ENCODE measurements at regions of chr16 and their contacts with region 1.

Region 1: DNA sequence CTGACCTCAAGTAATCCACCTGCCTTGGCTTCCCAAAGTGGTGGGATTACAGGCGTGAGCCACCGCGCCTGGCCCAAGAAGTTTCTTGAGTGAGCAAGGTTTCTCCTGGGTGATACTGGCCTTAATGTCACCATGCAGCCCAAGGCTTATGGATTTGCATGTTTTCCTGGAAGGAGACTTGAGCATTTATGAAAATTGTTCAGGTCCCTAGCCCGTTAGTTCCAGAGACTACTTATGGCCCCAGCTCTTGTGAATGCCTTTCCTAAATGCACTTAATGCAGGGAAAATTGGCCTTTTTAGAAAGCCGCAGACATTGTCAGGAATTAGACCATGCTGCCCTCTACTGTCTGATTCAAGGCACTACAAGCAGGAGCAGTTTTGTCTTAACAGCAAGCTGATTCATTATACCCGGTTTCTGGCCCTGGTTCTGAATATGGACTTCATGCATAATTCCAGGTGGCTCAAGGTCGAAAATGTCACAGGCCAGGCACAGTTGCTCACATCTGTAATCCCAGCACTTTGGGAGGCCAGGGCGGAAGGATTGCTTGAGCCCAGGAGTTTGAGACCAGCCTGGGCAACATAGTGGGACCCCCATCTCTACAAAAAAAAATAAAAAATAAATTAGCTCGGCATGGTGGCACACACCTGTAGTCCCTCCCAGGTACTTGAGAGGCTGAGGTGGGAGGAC is 91.3 kb downstream of the SNX29 start:
- DNase-seq: peak; percentile 77
- CTCF ChIP-seq: peak; percentile 86

Region 2: DNA sequence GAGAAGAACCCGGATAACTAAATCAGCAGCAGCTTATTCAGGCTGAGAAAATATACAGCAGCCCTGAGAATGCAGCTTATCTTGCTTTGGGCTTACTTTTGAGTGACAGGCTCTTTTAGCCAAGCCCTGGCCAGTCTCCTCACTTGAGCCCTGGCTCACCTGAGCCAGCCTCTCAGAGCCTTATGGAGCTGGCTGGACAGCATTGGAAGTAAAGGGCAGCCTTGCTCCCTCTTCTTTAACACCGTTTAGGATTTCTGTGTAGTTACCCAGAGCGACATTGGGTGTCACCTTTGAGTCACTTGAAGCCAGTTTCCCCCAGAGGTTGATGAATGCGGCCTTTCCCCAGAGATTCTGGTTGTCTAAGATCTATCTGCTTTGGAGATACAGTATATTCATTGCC is 118.3 kb before region 1 on chr16:
- CTCF ChIA-PET with region 1: interaction called, 54 read pairs
- POLR2A ChIA-PET with region 1: no interaction called
- DNase-seq: peak; percentile 81
- CTCF ChIP-seq: peak; percentile 81

Region 3: GRCh38 chr16:11964761-11965551 is 102.9 kb before region 1 on chr16 and contains the start of gene TNFRSF17:
- CTCF ChIA-PET with region 1: interaction called, 18 read pairs
- POLR2A ChIA-PET with region 1: no interaction called
- DNase-seq: peak; percentile 71
- CTCF ChIP-seq: no peak

Region 4: DNA sequence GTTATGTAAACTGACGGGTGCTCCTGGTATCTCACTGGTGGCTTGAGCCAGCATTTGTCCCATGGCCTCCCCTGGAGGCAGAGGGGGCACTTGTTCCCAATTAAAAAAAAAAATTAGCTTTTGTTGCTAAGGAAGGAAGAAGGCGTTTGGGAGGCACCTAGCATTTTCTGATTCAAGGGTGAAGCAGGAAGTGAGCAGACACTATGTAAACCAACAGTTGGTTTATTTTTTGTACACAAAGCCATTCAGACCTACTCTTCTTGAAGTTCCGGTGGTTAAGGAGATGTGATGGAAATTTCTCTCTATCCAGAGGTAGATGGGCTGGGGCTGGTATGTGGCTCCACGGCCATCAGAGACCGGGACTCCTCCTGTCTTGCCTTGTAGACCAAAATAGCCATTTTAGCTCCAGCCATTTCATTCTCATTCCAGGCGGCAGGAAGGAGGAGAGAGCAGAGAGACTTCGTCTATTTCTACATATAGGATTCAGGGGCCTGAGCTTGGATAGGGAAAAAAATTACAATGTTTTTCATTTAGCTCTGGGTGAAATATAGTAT is 11.6 kb after region 1 on chr16:
- CTCF ChIA-PET with region 1: interaction called, 28 read pairs
- POLR2A ChIA-PET with region 1: no interaction called
- DNase-seq: no peak
- CTCF ChIP-seq: no peak

Region 5: DNA sequence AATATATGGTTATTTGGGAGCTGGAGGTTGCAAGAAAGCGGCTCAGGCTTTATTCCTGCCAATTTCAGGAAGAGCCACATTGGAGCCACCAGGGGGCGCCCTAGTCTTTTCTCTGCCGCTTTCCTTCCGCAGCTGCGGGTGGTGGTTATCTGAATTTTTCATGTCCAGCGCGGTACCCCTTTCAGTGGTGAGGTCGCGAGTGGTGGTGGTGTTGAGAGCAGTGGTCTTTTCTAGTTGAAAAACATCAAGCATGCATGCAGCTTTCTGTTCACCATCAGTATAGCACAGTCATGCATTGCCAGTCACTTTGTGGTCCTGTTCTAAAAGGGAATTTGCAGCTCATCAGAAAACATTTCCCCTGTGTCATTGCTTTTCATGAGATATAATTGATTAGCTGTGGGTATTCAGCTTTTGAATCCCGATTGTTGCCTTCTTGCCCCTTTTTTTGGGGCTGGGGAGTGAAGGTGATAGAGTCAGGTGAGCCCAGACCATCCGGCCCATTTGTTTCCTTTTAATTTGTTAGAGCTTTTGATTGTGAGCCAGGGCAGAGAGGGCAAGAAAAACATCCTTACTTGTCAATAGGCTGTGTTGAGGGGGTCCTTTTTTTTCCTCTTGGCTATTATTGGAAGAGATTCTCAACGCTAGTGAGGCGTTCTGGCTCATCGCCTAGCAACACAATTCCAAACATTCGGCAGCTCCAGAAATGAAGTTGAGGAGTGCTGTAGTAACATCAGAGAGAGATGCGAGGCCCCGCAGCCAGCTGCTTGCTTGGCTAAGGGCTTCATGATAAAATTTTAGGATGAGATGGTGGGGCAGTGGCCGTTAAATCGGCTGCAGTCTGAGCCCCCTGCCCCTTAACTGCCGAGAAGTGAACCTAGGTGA is 27.7 kb after region 1 on chr16:
- CTCF ChIA-PET with region 1: interaction called, 15 read pairs
- POLR2A ChIA-PET with region 1: no interaction called
- DNase-seq: peak; percentile 67
- CTCF ChIP-seq: peak; percentile 76